CD4-positive, alpha-beta T cell (primary cell): ENCODE measurements at regions of chr18 and their contacts with region 1.

Region 1: DNA sequence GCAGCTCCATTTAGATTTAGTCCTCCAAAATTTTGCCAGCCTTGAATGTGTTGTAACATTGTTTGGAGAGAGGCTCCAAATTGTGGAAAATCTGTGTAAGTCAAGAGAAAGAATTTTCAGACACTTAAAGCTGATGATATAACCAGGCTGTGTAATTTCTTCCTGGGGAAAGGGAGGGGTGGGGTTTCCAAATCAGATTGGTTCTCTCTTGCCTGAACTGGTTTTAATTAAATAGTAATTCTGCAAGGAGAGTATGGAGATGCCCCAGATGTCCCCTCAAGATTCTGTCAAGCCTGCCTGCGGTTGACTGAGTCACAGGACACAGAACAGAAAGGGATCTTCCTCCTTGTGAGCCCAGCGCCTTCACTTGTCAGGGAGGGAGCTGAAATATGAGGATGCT is 54.5 kb downstream of the C18orf63 start:
- DNase-seq: no peak
- ATAC-seq: no peak
- H3K4me3 ChIP-seq: no peak overlapping the region
- H3K4me3 Mint-ChIP-seq: no peak overlapping the region
- H3K27ac ChIP-seq: no peak overlapping the region
- H3K27ac Mint-ChIP-seq: no peak overlapping the region
- H3K4me1 ChIP-seq: peaks cover 31% of the 10 kb centered on the region
- H3K4me1 Mint-ChIP-seq: peaks cover 46% of the 10 kb centered on the region
- H3K27me3 ChIP-seq: no peaks in the 10 kb centered on the region
- H3K27me3 Mint-ChIP-seq: no peaks in the 10 kb centered on the region
- CTCF ChIP-seq: no peak

Region 2: GRCh38 chr18:74291771-74292540 is 78.2 kb before region 1 on chr18 and contains the start of gene CYB5A:
- CTCF ChIA-PET with region 1: no interaction called
- POLR2A ChIA-PET with region 1: no interaction called
- intact Hi-C with region 1: loop called in 1 of 2 experiments (anchors 5 kb)
- DNase-seq: peak; percentile 97 to 99 (median 98)
- ATAC-seq: peak; percentile 96
- H3K4me3 ChIP-seq: peak within 1 kb of the TSS; percentile 99
- H3K4me3 Mint-ChIP-seq: no peak within 1 kb of the TSS
- H3K27ac ChIP-seq: peak within 1 kb of the TSS in 1 of 2 donors; percentile 61
- H3K27ac Mint-ChIP-seq: peak within 1 kb of the TSS; percentile 35
- H3K4me1 ChIP-seq: peaks cover 19% of the 10 kb centered on the region
- H3K4me1 Mint-ChIP-seq: peaks cover 12% of the 10 kb centered on the region
- H3K27me3 ChIP-seq: no peaks in the 10 kb centered on the region
- H3K27me3 Mint-ChIP-seq: no peaks in the 10 kb centered on the region
- CTCF ChIP-seq: peak; percentile 20
- total RNA-seq, gene CYB5A: 3.7 to 4.1 TPM

Region 3: GRCh38 chr18:74353169-74353775 is 16.8 kb before region 1 on chr18:
- CTCF ChIA-PET with region 1: interaction called, 20 read pairs
- POLR2A ChIA-PET with region 1: interaction called, 10 read pairs
- intact Hi-C with region 1: loop called in 1 of 2 experiments (anchors 2 kb)
- DNase-seq: peak; percentile 35 to 85 (median 52)
- ATAC-seq: peak; percentile 88
- H3K4me3 ChIP-seq: no peak overlapping the region
- H3K4me3 Mint-ChIP-seq: no peak overlapping the region
- H3K27ac ChIP-seq: no peak overlapping the region
- H3K27ac Mint-ChIP-seq: no peak overlapping the region
- H3K4me1 ChIP-seq: peaks cover 2% of the 10 kb centered on the region
- H3K4me1 Mint-ChIP-seq: peaks cover 5% of the 10 kb centered on the region
- H3K27me3 ChIP-seq: no peaks in the 10 kb centered on the region
- H3K27me3 Mint-ChIP-seq: no peaks in the 10 kb centered on the region
- CTCF ChIP-seq: peak; percentile 85

Region 4: DNA sequence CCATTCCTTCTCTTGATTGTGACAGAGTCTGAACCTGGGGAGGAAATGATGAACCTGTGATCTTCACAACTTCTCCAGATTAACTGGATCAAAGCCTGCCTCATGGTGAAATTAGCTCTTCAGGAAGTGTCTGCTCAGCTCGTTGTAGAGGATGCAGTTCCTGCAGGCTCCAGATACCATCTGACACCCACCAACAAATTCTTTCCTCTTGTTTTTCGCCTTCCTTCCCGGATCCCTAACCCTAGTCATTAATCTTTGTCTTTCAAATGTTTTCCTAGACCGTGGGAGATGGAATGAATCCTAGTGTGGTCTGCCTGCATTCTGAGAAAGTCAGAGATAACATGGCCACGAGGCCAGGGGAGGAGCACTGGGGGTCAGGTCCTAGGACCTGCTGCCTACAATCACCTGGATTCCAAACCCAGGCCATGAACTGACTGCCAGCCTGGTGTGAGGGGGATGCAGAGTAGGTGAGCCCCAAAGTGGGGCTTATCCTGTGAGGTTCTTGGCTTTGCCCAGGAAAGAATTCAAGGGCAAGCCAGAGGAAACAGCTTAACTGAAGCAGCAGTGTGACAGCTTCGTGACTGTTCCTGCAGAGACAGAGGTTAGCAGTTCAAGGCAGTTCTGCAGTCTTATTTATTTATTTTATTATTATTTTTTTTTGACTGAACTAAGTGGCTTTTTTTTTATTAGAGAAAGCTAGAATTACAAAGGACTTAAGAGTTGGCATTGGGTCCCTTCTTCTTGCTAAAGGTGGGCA is 19.2 kb after region 1 on chr18:
- CTCF ChIA-PET with region 1: no interaction called
- POLR2A ChIA-PET with region 1: interaction called, 14 read pairs
- intact Hi-C with region 1: no loop called
- DNase-seq: peak in 2 of 14 experiments; percentile 13 to 14
- ATAC-seq: peak; percentile 37
- H3K4me3 ChIP-seq: no peak overlapping the region
- H3K4me3 Mint-ChIP-seq: no peak overlapping the region
- H3K27ac ChIP-seq: no peak overlapping the region
- H3K27ac Mint-ChIP-seq: no peak overlapping the region
- H3K4me1 ChIP-seq: peaks cover 10% of the 10 kb centered on the region
- H3K4me1 Mint-ChIP-seq: peaks cover 13% of the 10 kb centered on the region
- H3K27me3 ChIP-seq: no peaks in the 10 kb centered on the region
- H3K27me3 Mint-ChIP-seq: peaks cover 6% of the 10 kb centered on the region
- CTCF ChIP-seq: no peak

Region 5: GRCh38 chr18:74407888-74408287 is 37.8 kb after region 1 on chr18:
- CTCF ChIA-PET with region 1: no interaction called
- POLR2A ChIA-PET with region 1: interaction called, 5 read pairs
- intact Hi-C with region 1: loop called in 1 of 2 experiments (anchors 5 kb)
- DNase-seq: peak in 1 of 14 experiments; percentile 16
- ATAC-seq: no peak
- H3K4me3 ChIP-seq: peak overlapping the region; percentile 19
- H3K4me3 Mint-ChIP-seq: peak overlapping the region; percentile 49
- H3K27ac ChIP-seq: peak overlapping the region; percentile 34 to 35
- H3K27ac Mint-ChIP-seq: peak overlapping the region; percentile 63
- H3K4me1 ChIP-seq: peaks cover 16% of the 10 kb centered on the region
- H3K4me1 Mint-ChIP-seq: peaks cover 25% of the 10 kb centered on the region
- H3K27me3 ChIP-seq: no peaks in the 10 kb centered on the region
- H3K27me3 Mint-ChIP-seq: no peaks in the 10 kb centered on the region
- CTCF ChIP-seq: no peak